GM13977 (cell line): ENCODE measurements at regions of chr3 and their contacts with region 1.

Region 1: DNA sequence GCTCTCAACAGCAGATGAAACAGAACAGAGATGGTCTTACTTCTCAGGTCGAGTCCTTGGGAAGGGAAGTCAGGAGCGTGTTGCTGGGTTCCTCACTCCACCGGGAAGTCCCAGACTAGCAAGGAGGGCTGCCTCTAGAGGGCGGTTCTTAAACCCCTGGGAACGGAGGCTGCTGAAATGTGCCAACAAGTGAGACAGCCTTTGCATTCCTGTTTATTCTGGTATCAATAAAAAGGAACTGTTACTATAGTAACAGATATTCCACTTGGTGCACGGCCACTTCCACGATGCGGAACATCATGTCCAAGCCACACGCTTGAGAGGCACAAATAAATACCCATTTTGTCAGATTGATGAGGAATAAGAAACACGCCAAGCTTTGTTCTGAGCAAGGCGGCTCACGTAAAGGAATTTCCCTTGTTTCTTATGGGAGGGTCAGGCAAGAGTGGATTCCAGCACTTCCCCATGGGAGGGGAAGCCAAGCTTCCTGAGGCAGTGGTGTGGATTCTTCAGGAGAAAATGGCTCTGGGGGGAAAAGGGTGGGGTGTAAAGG is at the start of gene FAM107A:
- DNase-seq: no peak
- CTCF ChIP-seq: no peak

Region 2: GRCh38 chr3:58628823-58629562 is 51.6 kb after region 1 on chr3:
- in situ Hi-C with region 1: loop called (anchors 10 kb)
- DNase-seq: no peak
- CTCF ChIP-seq: no peak